Aorta (tissue), 5 donors: ENCODE measurements at regions of chr6 and their contacts with region 1.

Region 1: DNA sequence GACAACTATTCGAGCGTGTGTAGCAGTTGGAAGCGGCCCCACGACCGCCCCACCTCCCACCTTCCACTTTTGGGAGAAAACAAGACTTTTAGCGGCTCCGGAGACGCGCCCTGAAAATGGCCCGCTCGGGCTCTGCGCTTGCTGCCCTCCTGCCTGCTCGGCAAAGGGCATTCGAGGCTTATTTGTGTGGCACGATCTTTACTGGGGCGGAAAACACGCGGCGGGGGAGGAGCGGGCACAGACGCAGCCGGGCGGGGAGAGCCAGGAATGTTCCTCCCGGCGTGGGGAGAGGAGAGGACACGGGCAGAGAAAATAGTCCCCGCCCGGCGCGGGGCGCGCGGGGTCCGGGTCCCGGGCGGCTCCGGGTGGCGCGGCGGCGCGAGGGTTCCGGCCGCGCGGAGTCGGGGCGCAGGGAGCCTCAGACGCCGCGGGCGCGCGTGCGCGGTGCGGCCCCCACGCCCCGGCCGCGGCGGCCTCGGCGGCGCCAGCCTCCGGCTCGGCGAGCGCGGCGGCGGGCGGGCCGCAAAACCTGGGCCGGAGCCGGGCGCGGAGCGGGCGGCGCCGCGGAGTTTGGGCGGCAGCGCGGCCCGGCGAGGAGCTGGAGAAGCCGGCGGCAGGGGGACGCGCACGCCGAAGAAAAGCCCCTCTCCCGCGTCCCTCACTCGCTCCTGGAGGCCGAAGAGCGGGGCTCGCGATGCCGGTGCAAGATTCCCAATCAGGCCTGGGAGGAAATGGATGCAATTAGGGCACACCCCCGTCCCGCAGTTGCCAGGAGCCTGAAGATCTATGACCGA is 90.0 kb upstream of the ARID1B start:
- DNase-seq: peak; percentile 95 to 97
- ATAC-seq: peak; percentile 97
- H3K4me3 ChIP-seq: peak overlapping the region; percentile 89 to 97
- H3K27ac ChIP-seq: peak overlapping the region; percentile 94 to 99
- H3K4me1 ChIP-seq: peaks cover 1 to 2% of the 10 kb centered on the region in 2 donors
- H3K27me3 ChIP-seq: no peaks in the 10 kb centered on the region

Region 2: GRCh38 chr6:156719720-156720563 is 32.8 kb after region 1 on chr6:
- intact Hi-C with region 1: loop called in 1 of 2 experiments (anchors 2 kb)
- DNase-seq: peak; percentile 97 to 98
- ATAC-seq: peak; percentile 96
- H3K4me3 ChIP-seq: peak overlapping the region in 1 of 2 donors; percentile 19
- H3K27ac ChIP-seq: peak overlapping the region in 1 of 2 donors; percentile 96
- H3K4me1 ChIP-seq: no peaks in the 10 kb centered on the region
- H3K27me3 ChIP-seq: no peaks in the 10 kb centered on the region

Region 3: GRCh38 chr6:157021344-157021992 is 334.3 kb after region 1 on chr6:
- intact Hi-C with region 1: loop called (anchors 5 kb)
- DNase-seq: peak; percentile 96 to 97
- ATAC-seq: peak; percentile 97
- H3K4me3 ChIP-seq: peak overlapping the region; percentile 91 to 97
- H3K27ac ChIP-seq: peak overlapping the region; percentile 98 to 100
- H3K4me1 ChIP-seq: peaks cover 0 to 2% of the 10 kb centered on the region in 2 donors
- H3K27me3 ChIP-seq: no peaks in the 10 kb centered on the region